Left colon (tissue), 2 donors: ENCODE measurements at regions of chr4 and their contacts with region 1.

Region 1: GRCh38 chr4:113404841-113405240 is 355.4 kb downstream of the ANK2 start:
- DNase-seq: no peak
- ATAC-seq: no peak

Region 2: GRCh38 chr4:113243312-113243711 is 161.5 kb before region 1 on chr4:
- intact Hi-C with region 1: no loop called
- DNase-seq: no peak
- ATAC-seq: no peak

Region 3: DNA sequence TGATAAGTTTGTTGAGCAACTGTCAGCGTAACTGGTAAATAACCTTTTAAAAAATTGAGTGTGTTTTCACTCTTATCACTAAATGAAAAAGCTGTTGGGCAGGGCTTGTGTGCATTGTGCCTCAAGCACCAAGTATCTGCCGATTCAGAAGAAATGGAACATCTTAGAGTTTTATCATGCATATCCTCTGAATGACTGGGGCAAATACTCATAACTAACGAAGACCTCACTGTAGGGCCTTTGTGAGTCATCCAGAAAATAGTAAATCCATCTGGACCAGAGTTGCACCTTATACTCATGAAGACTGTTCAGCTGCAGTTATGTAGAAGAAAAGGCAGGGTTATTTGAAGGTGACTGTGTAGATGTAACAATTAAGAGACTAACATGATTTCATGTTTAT is 134.6 kb after region 1 on chr4:
- intact Hi-C with region 1: loop called in 1 of 2 experiments (anchors 10 kb)
- DNase-seq: no peak
- ATAC-seq: no peak

Region 4: DNA sequence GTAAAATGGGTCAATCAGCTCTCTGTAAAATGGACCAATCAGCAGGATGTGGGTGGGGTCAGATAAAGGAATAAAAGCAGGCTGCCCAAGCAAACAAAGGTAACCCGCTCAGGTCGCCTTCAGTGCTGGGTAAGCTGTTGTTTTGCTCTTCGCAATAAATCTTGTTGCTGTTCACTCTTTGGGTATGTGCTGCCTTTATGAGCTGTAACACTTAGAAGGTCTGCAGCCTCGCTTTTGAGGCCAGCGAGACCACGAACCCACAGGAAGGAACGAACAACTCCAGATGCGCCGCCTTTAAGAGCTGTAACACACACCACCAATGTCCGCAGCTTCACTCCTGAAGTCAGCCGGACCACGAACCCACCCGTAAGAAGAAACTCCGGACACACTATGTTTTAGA is 368.2 kb after region 1 on chr4:
- intact Hi-C with region 1: loop called in 1 of 2 experiments (anchors 5 kb)
- DNase-seq: no peak
- ATAC-seq: no peak